Sigmoid colon (tissue), 7 donors: ENCODE measurements at regions of chr2 and their contacts with region 1.

Region 1: DNA sequence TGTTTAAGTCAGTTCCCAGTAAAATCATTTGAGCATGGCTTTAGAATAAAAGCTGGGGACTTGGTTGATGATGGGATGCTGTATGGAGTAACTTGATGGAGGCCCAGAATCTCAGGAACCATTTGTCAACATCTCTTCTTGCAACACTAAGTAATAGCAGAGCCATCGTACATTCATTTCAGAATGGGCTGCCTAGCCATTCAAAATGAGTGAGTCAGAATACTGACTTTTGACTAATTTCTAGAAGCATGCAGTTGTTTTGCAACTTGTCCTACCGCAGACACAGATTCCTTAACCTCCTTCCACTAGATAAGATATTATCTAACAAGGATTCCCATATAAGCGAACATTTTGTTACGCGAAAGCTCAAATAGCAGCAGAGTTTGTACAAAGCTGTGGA is 229.5 kb downstream of the CNTNAP5 start:
- DNase-seq: no peak
- H3K4me3 ChIP-seq: no peak overlapping the region
- H3K27ac ChIP-seq: no peak overlapping the region
- H3K4me1 ChIP-seq: no peaks in the 10 kb centered on the region
- H3K27me3 ChIP-seq: no peaks in the 10 kb centered on the region
- CTCF ChIP-seq: no peak
- EP300 ChIP-seq: no peak
- POLR2A ChIP-seq: no peak

Region 2: DNA sequence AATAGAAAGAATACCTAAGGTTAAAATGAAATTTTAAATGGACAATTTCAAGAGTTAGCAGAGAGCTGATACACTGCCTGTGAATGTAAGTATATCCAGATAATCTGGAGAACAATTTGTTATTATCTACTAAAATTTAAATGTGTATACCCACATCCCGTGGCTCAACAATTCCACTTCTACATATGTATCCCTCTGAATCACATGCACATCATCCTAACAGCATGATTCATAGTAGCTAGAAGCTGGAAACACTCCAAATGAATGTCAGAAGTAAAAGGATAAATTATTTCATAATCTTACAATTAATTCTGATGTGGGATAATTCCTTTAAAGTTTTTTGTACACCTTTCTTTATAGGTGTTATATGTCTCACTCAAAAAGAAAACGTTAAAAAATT is 141.7 kb before region 1 on chr2:
- intact Hi-C with region 1: no loop called
- DNase-seq: no peak
- H3K4me3 ChIP-seq: no peak overlapping the region
- H3K27ac ChIP-seq: no peak overlapping the region
- H3K4me1 ChIP-seq: no peaks in the 10 kb centered on the region
- H3K27me3 ChIP-seq: no peaks in the 10 kb centered on the region
- CTCF ChIP-seq: no peak
- EP300 ChIP-seq: no peak
- POLR2A ChIP-seq: no peak

Region 3: GRCh38 chr2:124309563-124310138 is 55.0 kb after region 1 on chr2:
- intact Hi-C with region 1: loop called (anchors 2 kb)
- DNase-seq: no peak
- H3K4me3 ChIP-seq: no peak overlapping the region
- H3K27ac ChIP-seq: no peak overlapping the region
- H3K4me1 ChIP-seq: no peaks in the 10 kb centered on the region
- H3K27me3 ChIP-seq: no peaks in the 10 kb centered on the region
- CTCF ChIP-seq: no peak
- EP300 ChIP-seq: no peak
- POLR2A ChIP-seq: no peak

Region 4: DNA sequence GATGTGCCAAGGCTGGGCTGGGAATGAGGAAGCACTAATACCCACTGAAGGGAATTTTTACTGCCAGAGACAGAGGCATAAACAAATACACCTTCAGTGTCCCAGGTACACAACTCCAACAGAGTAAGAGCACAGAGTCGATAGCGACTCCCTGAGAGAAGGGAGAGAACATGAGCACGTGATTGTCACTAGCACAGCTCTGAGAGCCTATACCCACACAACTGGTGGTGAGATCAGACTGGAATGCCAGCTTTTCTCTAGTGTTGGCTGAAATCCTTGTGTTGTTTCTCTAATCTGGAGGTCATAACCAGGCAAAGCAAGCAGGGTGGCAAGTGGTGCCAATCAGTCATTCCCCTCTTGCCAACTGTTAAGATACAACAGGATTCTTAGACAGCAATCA is 147.7 kb after region 1 on chr2:
- intact Hi-C with region 1: no loop called
- DNase-seq: no peak
- H3K4me3 ChIP-seq: no peak overlapping the region
- H3K27ac ChIP-seq: no peak overlapping the region
- H3K4me1 ChIP-seq: no peaks in the 10 kb centered on the region
- H3K27me3 ChIP-seq: no peaks in the 10 kb centered on the region
- CTCF ChIP-seq: no peak
- EP300 ChIP-seq: no peak
- POLR2A ChIP-seq: no peak